GM12878 (cell line): ENCODE measurements at regions of chr4 and their contacts with region 1.

Region 1: GRCh38 chr4:18366892-18367291 is 345.3 kb upstream of the LCORL start:
- DNase-seq: peak; percentile 7
- ATAC-seq: peak; percentile 99
- H3K4me3 ChIP-seq: no peak overlapping the region
- H3K27ac ChIP-seq: no peak overlapping the region
- H3K4me1 ChIP-seq: no peaks in the 10 kb centered on the region
- H3K27me3 ChIP-seq: no peaks in the 10 kb centered on the region
- CTCF ChIP-seq: peak; percentile 59 to 66 (median 62); a peak in 5 of 6 replicates
- EP300 ChIP-seq: no peak
- POLR2A ChIP-seq: no peak
- RAD21 ChIP-seq: peak; percentile 79

Region 2: GRCh38 chr4:17552427-17552826 is 814.5 kb before region 1 on chr4:
- CTCF ChIA-PET with region 1: interaction called, 7 read pairs
- POLR2A ChIA-PET with region 1: no interaction called
- RAD21 ChIA-PET with region 1: interaction called, 4 read pairs
- SMC1A ChIA-PET with region 1: interaction called, 4 read pairs
- in situ Hi-C with region 1: loop called (anchors 10 kb)
- intact Hi-C with region 1: loop called (anchors 2 kb)
- DNase-seq: no peak
- ATAC-seq: no peak
- H3K4me3 ChIP-seq: no peak overlapping the region
- H3K27ac ChIP-seq: no peak overlapping the region
- H3K4me1 ChIP-seq: no peaks in the 10 kb centered on the region
- H3K27me3 ChIP-seq: no peaks in the 10 kb centered on the region
- CTCF ChIP-seq: no peak
- EP300 ChIP-seq: no peak
- POLR2A ChIP-seq: no peak
- RAD21 ChIP-seq: no peak

Region 3: GRCh38 chr4:17817020-17817419 is 549.9 kb before region 1 on chr4:
- CTCF ChIA-PET with region 1: interaction called, 78 read pairs
- POLR2A ChIA-PET with region 1: no interaction called
- RAD21 ChIA-PET with region 1: interaction called, 23 read pairs
- SMC1A ChIA-PET with region 1: interaction called, 46 read pairs
- in situ Hi-C with region 1: loop called (anchors 5 kb)
- intact Hi-C with region 1: loop called (anchors 1 kb)
- DNase-seq: peak; percentile 41
- ATAC-seq: peak; percentile 83
- H3K4me3 ChIP-seq: no peak overlapping the region
- H3K27ac ChIP-seq: no peak overlapping the region
- H3K4me1 ChIP-seq: no peaks in the 10 kb centered on the region
- H3K27me3 ChIP-seq: no peaks in the 10 kb centered on the region; a peak in 1 of 4 replicates
- CTCF ChIP-seq: peak; percentile 37 to 63 (median 61); a peak in 5 of 6 replicates
- EP300 ChIP-seq: no peak
- POLR2A ChIP-seq: no peak
- RAD21 ChIP-seq: peak; percentile 82

Region 4: GRCh38 chr4:17934286-17934685 is 432.6 kb before region 1 on chr4:
- CTCF ChIA-PET with region 1: no interaction called
- POLR2A ChIA-PET with region 1: no interaction called
- RAD21 ChIA-PET with region 1: no interaction called
- SMC1A ChIA-PET with region 1: no interaction called
- in situ Hi-C with region 1: no loop called
- intact Hi-C with region 1: loop called (anchors 5 kb)
- DNase-seq: no peak
- ATAC-seq: no peak
- H3K4me3 ChIP-seq: no peak overlapping the region
- H3K27ac ChIP-seq: no peak overlapping the region
- H3K4me1 ChIP-seq: no peaks in the 10 kb centered on the region
- H3K27me3 ChIP-seq: no peaks in the 10 kb centered on the region
- CTCF ChIP-seq: no peak; a peak in 1 of 6 replicates
- EP300 ChIP-seq: no peak
- POLR2A ChIP-seq: no peak
- RAD21 ChIP-seq: no peak

Region 5: DNA sequence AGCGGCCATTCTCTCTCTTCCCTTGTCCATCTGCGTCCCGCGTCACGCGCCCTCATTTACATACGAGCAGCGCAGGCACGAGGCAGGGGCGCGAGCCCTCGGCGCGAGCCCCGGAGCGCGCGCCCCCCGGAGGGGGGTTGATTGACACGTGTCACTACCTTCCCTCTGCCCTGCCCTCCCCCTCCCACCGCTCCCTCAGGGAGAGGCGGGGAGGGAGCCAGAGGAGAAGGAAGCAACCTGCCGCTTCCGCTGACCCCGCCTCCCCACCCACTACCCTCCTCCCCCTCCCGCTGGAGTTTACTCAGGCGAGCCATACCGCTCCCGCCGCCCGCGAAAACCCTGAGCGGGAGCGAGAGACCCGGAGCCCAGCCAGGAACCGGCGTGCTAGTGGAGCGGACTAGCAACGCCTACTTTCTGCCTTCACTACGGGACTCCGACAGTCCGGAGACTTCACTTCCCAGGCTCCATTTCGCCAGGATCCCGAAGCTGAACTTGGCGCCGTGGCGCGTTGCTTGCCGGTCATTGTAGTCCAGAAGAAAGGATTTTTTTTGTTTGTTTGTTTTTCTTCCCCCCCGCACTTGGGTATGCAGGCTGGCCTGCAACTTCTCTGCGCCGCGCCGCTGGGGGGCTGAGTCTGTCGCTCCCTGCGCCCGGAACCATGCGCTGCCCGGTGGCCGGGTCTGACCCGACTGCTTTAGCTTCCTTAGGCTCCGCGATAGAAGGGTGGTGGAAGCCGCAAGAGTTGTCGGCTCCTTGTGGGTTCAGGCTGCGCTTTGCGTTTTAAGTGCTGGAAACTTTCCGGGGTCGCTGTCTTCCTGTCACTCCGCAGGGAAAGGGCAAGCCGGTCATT is 344.9 kb before region 1 on chr4 and contains the start of gene LCORL:
- CTCF ChIA-PET with region 1: no interaction called
- POLR2A ChIA-PET with region 1: no interaction called
- RAD21 ChIA-PET with region 1: no interaction called
- SMC1A ChIA-PET with region 1: no interaction called
- in situ Hi-C with region 1: no loop called
- intact Hi-C with region 1: loop called (anchors 2 kb)
- DNase-seq: peak; percentile 90
- ATAC-seq: peak; percentile 87
- H3K4me3 ChIP-seq: peak within 1 kb of the TSS; percentile 90
- H3K27ac ChIP-seq: peak within 1 kb of the TSS; percentile 84
- H3K4me1 ChIP-seq: no peaks in the 10 kb centered on the region; the same call in 1 of the 2 replicates
- H3K27me3 ChIP-seq: no peaks in the 10 kb centered on the region
- CTCF ChIP-seq: peak; percentile 29 to 45 (median 35); a peak in 4 of 6 replicates
- EP300 ChIP-seq: no peak
- POLR2A ChIP-seq: peak; percentile 77
- RAD21 ChIP-seq: peak; percentile 43; the same call in 1 of the 2 replicates
- polyA plus RNA-seq, gene LCORL: 2.2 to 3.3 TPM

Region 6: GRCh38 chr4:18075823-18076433 is 291.0 kb before region 1 on chr4:
- CTCF ChIA-PET with region 1: interaction called, 3 read pairs
- POLR2A ChIA-PET with region 1: no interaction called
- RAD21 ChIA-PET with region 1: no interaction called
- SMC1A ChIA-PET with region 1: interaction called, 3 read pairs
- in situ Hi-C with region 1: no loop called
- intact Hi-C with region 1: loop called (anchors 2 kb)
- DNase-seq: no peak
- ATAC-seq: peak; percentile 73
- H3K4me3 ChIP-seq: no peak overlapping the region
- H3K27ac ChIP-seq: no peak overlapping the region
- H3K4me1 ChIP-seq: no peaks in the 10 kb centered on the region
- H3K27me3 ChIP-seq: no peaks in the 10 kb centered on the region
- CTCF ChIP-seq: peak; percentile 5 to 38 (median 32); a peak in 1 of 6 replicates
- EP300 ChIP-seq: no peak
- POLR2A ChIP-seq: no peak
- RAD21 ChIP-seq: peak; percentile 32